Caco-2 (cell line): ENCODE measurements at regions of chr2 and their contacts with region 1.

Region 1: GRCh38 chr2:88471083-88471942 is 18.8 kb upstream of the FOXI3 start:
- DNase-seq: no peak
- H3K4me3 ChIP-seq: no peak overlapping the region
- H3K4me3 Mint-ChIP-seq: no peak overlapping the region
- H3K27ac Mint-ChIP-seq: no peak overlapping the region
- H3K4me1 ChIP-seq: no peaks in the 10 kb centered on the region
- H3K4me1 Mint-ChIP-seq: no peaks in the 10 kb centered on the region
- H3K27me3 ChIP-seq: no peaks in the 10 kb centered on the region
- H3K27me3 Mint-ChIP-seq: peaks cover 8% of the 10 kb centered on the region
- CTCF ChIP-seq: no peak

Region 2: DNA sequence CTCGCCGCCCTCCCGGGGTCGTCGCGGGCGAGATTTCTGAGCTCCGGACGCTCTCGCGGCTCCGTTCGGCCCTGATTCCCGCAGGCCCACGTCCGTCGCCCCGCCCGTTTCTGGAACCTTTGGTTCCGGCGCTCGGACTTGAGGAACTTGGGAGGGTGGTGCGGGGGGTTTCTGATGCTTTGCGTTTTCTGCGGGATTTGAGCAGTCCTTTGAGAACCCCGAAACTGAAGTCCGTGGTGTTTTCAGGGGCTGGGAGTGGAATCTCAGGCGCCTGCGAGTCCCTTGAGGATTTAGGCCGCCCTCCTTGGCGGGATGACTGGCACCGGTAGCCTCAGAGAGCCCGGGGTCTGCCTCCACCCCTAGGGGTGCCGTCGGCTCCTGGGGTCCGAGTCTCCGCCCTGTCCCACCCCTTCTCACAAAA is 300.8 kb before region 1 on chr2:
- CTCF ChIA-PET with region 1: no interaction called
- POLR2A ChIA-PET with region 1: interaction called, 10 read pairs
- intact Hi-C with region 1: no loop called
- DNase-seq: no peak
- H3K4me3 ChIP-seq: peak overlapping the region; percentile 49
- H3K4me3 Mint-ChIP-seq: peak overlapping the region; percentile 78
- H3K27ac Mint-ChIP-seq: peak overlapping the region; percentile 78
- H3K4me1 ChIP-seq: no peaks in the 10 kb centered on the region
- H3K4me1 Mint-ChIP-seq: peaks cover 7% of the 10 kb centered on the region
- H3K27me3 ChIP-seq: no peaks in the 10 kb centered on the region
- H3K27me3 Mint-ChIP-seq: no peaks in the 10 kb centered on the region
- CTCF ChIP-seq: no peak

Region 3: DNA sequence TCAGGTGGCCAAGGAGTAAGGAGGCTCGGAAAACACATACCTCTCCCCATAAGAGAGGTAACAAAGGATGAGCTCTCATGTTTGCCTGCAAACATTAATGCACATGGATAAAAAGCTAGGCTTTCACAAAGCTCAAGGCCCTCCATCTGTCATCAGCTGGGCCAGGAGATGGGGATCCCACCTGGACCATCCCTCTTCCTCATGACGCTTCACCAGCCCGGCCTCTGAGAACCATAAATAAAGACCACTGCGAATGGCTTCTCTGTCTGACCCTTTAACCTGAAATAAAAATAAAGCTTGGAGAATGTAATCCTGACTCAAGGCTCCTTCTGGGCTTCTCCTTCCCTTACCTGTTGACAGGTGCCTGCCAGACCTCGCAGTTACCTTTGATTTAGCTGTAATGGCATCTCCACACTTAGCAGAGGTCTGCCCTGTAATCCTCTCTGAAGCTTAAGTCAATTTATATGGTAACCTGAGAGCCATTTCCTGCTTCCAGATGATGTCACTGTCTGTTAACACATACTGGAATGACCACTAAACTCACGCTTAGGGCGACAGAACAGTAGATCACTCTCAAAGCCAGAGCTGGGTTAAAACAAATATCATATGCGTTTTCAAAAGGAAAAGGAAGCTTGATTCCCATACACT is 10.5 kb after region 1 on chr2:
- CTCF ChIA-PET with region 1: no interaction called
- POLR2A ChIA-PET with region 1: no interaction called
- intact Hi-C with region 1: no loop called
- DNase-seq: peak in 1 of 2 experiments; percentile 34
- H3K4me3 ChIP-seq: no peak overlapping the region
- H3K4me3 Mint-ChIP-seq: no peak overlapping the region
- H3K27ac Mint-ChIP-seq: no peak overlapping the region
- H3K4me1 ChIP-seq: no peaks in the 10 kb centered on the region
- H3K4me1 Mint-ChIP-seq: peaks cover 9% of the 10 kb centered on the region
- H3K27me3 ChIP-seq: no peaks in the 10 kb centered on the region
- H3K27me3 Mint-ChIP-seq: peaks cover 3% of the 10 kb centered on the region
- CTCF ChIP-seq: no peak

Region 4: GRCh38 chr2:88545121-88545520 is 73.8 kb after region 1 on chr2:
- CTCF ChIA-PET with region 1: no interaction called
- POLR2A ChIA-PET with region 1: no interaction called
- intact Hi-C with region 1: no loop called
- DNase-seq: peak; percentile 64 to 76
- H3K4me3 ChIP-seq: no peak overlapping the region
- H3K4me3 Mint-ChIP-seq: no peak overlapping the region
- H3K27ac Mint-ChIP-seq: no peak overlapping the region
- H3K4me1 ChIP-seq: no peaks in the 10 kb centered on the region
- H3K4me1 Mint-ChIP-seq: no peaks in the 10 kb centered on the region
- H3K27me3 ChIP-seq: no peaks in the 10 kb centered on the region
- H3K27me3 Mint-ChIP-seq: no peaks in the 10 kb centered on the region
- CTCF ChIP-seq: no peak